Heart left ventricle (tissue), 16 donors: ENCODE measurements at regions of chr16 and their contacts with region 1.

Region 1: GRCh38 chr16:57764341-57765159 is 29.0 kb downstream of the KATNB1 start:
- DNase-seq: peak in 3 of 5 donors; percentile 19 to 62 (median 48)
- ATAC-seq: peak in 3 of 4 donors; percentile 38 to 57 (median 47)
- H3K4me3 ChIP-seq: no peak overlapping the region
- H3K27ac ChIP-seq: peak overlapping the region in 2 of 12 donors; percentile 29 to 37
- H3K4me1 ChIP-seq: peaks cover 0 to 6% (median 0%) of the 10 kb centered on the region in 12 donors
- H3K27me3 ChIP-seq: no peaks in the 10 kb centered on the region
- CTCF ChIP-seq: no peak
- POLR2A ChIP-seq: no peak

Region 2: DNA sequence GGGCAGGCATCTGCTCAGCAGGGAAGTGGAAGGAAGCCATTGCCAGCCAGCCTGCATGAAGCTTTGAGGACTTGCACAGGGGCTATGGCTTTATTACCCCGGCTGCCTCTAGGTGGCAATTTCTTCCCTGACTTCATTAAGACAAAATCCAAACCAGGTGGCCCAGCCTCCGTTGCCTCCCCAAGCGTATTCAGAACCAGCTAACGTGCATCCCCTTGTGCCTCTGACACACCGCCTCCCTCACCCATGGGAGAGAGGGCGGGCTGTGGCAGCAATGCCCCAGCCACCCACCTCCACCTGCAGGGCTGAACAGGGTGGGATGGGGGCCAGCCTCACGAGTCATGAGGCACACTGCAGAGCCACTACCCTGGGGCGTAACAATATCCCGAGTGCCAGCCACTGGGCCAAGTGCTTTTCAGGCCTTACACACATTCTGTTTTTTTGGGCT is 30.9 kb after region 1 on chr16:
- intact Hi-C with region 1: loop called in 7 of 10 experiments (anchors 5 kb)
- DNase-seq: peak in 1 of 5 donors; percentile 41
- ATAC-seq: peak in 2 of 4 donors; percentile 2 to 17
- H3K4me3 ChIP-seq: no peak overlapping the region
- H3K27ac ChIP-seq: peak overlapping the region in 4 of 12 donors; percentile 8 to 78 (median 52)
- H3K4me1 ChIP-seq: peaks cover 0 to 71% (median 51%) of the 10 kb centered on the region in 12 donors
- H3K27me3 ChIP-seq: no peaks in the 10 kb centered on the region
- CTCF ChIP-seq: peak in 11 of 12 donors; percentile 15 to 51 (median 36)
- POLR2A ChIP-seq: no peak